ENCODE measurements at regions of chr17 and their contacts with region 1.

Region 1: DNA sequence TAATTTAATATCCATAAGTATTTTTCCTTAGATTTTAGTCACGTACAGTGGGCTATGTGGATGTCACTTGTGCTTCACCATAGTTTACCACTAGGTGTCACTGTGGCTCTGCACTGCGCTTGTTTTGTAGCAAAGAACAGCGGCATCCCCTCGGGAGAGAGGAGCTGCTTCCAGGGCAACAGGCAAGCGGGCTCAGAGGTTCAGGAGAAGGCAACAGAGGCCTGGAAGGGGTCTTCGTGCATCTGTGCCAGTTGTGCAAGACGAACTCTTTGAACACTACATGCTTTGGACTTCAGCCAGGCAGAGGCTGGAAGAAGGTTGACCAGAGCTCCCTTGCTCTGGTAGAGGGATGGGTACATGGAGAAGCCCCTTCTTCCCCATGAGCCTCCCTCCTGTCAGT is 20.6 kb downstream of the CYB561 start:
- DNase-seq: peak; percentile 82
- H3K4me3 ChIP-seq: no peak overlapping the region
- H3K27ac ChIP-seq: no peak overlapping the region
- H3K4me1 ChIP-seq: peaks cover 3% of the 10 kb centered on the region
- H3K27me3 ChIP-seq: no peaks in the 10 kb centered on the region
- CTCF ChIP-seq: peak; percentile 89 to 94 (median 91)
- POLR2A ChIP-seq: no peak

Region 2: GRCh38 chr17:63171428-63172393 is 253.8 kb before region 1 on chr17:
- intact Hi-C with region 1: no loop called
- DNase-seq: no peak
- H3K4me3 ChIP-seq: no peak overlapping the region
- H3K27ac ChIP-seq: no peak overlapping the region
- H3K4me1 ChIP-seq: no peaks in the 10 kb centered on the region
- H3K27me3 ChIP-seq: no peaks in the 10 kb centered on the region
- CTCF ChIP-seq: no peak
- POLR2A ChIP-seq: no peak

Region 3: DNA sequence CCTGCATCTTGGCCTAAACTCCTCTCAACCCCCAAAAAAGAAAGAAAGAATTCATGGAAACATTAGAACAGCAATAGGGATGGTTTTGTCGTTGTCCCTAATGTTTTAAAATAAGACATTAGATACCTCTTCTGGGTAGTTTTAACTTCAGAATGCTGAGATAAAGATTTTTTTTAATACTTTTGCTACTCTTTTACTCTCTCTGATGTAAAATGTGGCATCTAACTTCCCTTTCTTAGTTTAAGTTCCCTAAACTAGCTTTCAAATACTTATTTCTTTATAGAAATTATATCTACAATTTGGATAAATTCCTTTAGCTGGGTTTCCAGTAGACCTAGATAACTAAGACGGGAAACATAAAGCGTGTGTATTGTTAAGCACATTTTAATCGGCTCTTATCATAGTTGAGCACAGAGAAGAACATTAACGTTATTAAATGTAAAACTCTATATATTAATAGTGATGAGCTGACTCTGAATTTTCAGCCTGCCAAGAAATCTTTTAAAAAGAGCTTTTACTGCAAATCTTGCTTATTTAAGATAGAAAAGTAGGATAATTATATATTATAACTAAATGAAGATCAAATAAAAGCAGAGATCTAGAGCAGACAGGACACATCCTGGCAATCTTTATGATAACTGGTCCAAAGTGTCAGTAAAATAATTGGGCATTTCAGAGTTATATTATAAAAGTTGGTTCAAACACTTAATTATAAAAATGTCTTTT is 162.6 kb before region 1 on chr17:
- intact Hi-C with region 1: no loop called
- DNase-seq: no peak
- H3K4me3 ChIP-seq: no peak overlapping the region
- H3K27ac ChIP-seq: no peak overlapping the region
- H3K4me1 ChIP-seq: no peaks in the 10 kb centered on the region
- H3K27me3 ChIP-seq: no peaks in the 10 kb centered on the region
- CTCF ChIP-seq: no peak
- POLR2A ChIP-seq: no peak

Region 4: GRCh38 chr17:63406689-63407330 is 18.7 kb before region 1 on chr17:
- intact Hi-C with region 1: no loop called
- DNase-seq: peak; percentile 85
- H3K4me3 ChIP-seq: no peak overlapping the region
- H3K27ac ChIP-seq: no peak overlapping the region
- H3K4me1 ChIP-seq: no peaks in the 10 kb centered on the region
- H3K27me3 ChIP-seq: no peaks in the 10 kb centered on the region
- CTCF ChIP-seq: peak; percentile 46 to 86 (median 78)
- POLR2A ChIP-seq: no peak

Region 5: GRCh38 chr17:63478791-63479494 is 53.5 kb after region 1 on chr17:
- intact Hi-C with region 1: loop called (anchors 2 kb)
- DNase-seq: peak; percentile 79
- H3K4me3 ChIP-seq: no peak overlapping the region
- H3K27ac ChIP-seq: no peak overlapping the region
- H3K4me1 ChIP-seq: peaks cover 6% of the 10 kb centered on the region
- H3K27me3 ChIP-seq: no peaks in the 10 kb centered on the region
- CTCF ChIP-seq: peak; percentile 30 to 88 (median 80)
- POLR2A ChIP-seq: no peak

Region 6: DNA sequence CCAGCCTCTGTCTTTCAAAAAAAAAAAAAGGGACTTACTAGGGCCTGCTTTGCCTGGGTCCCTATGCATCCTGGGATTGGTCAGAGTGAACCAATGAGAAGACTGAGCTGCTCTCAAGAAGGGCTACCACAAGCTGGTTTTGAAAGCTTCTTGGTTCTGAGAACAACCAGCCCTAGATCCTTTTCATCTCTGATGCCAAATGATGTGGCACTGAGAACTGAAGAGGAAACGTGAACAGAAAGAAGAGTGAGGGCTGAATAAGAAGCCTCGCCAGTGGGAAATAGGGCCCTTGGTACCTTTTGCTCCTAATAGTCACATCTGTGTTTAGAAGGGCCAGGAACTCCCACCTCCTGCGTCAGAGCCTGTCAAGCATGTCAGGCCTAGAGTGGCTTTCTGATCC is 185.9 kb after region 1 on chr17:
- intact Hi-C with region 1: loop called (anchors 5 kb)
- DNase-seq: no peak
- H3K4me3 ChIP-seq: no peak overlapping the region
- H3K27ac ChIP-seq: no peak overlapping the region
- H3K4me1 ChIP-seq: no peaks in the 10 kb centered on the region
- H3K27me3 ChIP-seq: no peaks in the 10 kb centered on the region
- CTCF ChIP-seq: no peak
- POLR2A ChIP-seq: no peak

Region 7: GRCh38 chr17:63697341-63698286 is 272.1 kb after region 1 on chr17:
- intact Hi-C with region 1: loop called (anchors 5 kb)
- DNase-seq: no peak
- H3K4me3 ChIP-seq: no peak overlapping the region
- H3K27ac ChIP-seq: peak overlapping the region; percentile 68 to 77
- H3K4me1 ChIP-seq: no peaks in the 10 kb centered on the region
- H3K27me3 ChIP-seq: no peaks in the 10 kb centered on the region
- CTCF ChIP-seq: peak in 3 of 4 experiments; percentile 42 to 58 (median 49)
- POLR2A ChIP-seq: no peak